Prostate gland (tissue), 2 donors: ENCODE measurements at regions of chr14 and their contacts with region 1.

Region 1: GRCh38 chr14:101359221-101360053 is 201.9 kb upstream of the DIO3 start:
- DNase-seq: peak; percentile 44
- H3K4me3 ChIP-seq: no peak overlapping the region
- H3K27ac ChIP-seq: peak overlapping the region; percentile 11 to 49
- H3K4me1 ChIP-seq: peaks cover 7% of the 10 kb centered on the region
- H3K27me3 ChIP-seq: no peaks in the 10 kb centered on the region
- CTCF ChIP-seq: no peak
- POLR2A ChIP-seq: no peak

Region 2: DNA sequence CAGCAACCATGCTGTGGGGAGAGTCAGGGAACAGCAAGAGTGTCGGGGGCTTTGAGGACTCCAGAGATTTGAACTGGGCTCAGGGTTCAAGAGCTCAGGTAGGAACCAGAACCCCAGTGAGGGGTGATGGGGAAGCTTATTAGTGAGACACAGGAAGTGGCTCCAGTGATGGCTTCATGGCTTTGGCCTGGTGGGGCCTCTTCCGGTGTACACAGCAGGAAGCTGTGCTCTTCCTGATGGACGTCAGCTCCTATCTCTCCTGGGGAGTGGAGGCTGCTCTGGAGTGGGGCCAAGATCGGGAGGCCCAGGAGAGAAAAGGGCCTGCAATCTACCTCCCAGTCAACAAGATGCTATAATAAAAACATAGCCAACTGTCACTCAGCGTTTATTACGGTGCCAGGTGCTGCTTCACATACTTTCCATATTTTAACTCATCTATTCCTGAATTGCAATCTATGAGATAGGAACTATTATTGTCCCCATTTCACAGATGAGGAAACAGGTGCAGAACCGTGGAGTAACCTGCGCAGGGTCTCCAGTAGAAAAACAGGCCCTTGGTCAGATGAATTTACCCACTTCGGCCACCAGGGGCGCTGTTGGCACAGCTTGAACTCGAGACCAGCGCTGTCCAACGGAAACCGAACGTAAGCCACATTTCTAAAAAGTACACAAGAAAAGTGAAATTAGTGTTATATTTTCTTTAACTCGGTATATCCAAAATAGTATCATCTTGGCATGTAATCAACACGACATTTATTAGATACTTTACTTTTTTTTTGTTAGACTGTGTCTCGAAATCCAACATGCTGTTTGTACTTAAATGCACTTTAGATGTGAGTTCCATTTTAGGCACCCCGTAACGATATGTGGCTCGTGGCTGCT is 696.3 kb before region 1 on chr14:
- intact Hi-C with region 1: loop called (anchors 10 kb)
- DNase-seq: peak; percentile 49
- H3K4me3 ChIP-seq: no peak overlapping the region
- H3K27ac ChIP-seq: no peak overlapping the region
- H3K4me1 ChIP-seq: peaks cover 10% of the 10 kb centered on the region
- H3K27me3 ChIP-seq: no peaks in the 10 kb centered on the region
- CTCF ChIP-seq: peak; percentile 84 to 94 (median 89)
- POLR2A ChIP-seq: no peak

Region 3: DNA sequence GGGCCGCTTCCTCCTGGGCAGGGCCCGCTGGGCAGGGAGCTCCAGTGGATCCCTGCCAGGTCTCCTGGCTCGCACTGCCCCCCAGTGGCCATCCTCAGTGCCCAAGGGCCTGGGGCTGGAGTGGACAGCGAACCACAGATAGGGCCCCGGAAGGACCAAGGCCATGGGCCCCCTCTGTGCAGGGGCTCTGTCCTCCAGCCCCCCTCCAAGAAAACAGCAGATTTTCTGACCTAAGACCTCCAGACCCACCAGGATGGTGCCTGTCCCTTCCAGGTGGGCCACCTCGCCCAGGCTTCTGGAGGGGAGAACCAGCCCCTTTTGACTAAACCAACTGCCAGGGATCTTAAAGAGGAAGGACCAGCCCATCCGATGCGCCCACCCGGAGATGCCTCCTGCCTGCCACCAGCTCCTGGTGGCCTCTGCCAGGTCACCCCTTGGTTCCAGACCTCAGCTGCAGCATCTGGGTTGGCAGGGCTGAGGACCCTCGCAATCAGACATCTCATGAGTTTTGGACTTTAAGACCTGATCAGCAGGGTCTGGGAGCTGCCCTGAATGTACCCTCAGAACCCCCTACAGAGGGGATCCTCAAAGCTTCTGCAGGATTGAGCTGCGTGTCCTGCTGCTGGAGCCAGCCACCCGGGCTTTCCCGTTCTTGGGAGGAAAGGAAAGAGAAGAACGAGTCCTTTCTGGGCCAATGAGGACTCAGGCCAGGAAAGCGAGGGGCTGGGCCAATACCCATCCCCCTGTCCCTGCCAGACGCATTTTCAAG is 123.9 kb before region 1 on chr14:
- intact Hi-C with region 1: loop called (anchors 10 kb)
- DNase-seq: no peak
- H3K4me3 ChIP-seq: no peak overlapping the region
- H3K27ac ChIP-seq: no peak overlapping the region
- H3K4me1 ChIP-seq: no peaks in the 10 kb centered on the region
- H3K27me3 ChIP-seq: no peaks in the 10 kb centered on the region
- CTCF ChIP-seq: peak; percentile 20 to 69 (median 50)
- POLR2A ChIP-seq: no peak

Region 4: DNA sequence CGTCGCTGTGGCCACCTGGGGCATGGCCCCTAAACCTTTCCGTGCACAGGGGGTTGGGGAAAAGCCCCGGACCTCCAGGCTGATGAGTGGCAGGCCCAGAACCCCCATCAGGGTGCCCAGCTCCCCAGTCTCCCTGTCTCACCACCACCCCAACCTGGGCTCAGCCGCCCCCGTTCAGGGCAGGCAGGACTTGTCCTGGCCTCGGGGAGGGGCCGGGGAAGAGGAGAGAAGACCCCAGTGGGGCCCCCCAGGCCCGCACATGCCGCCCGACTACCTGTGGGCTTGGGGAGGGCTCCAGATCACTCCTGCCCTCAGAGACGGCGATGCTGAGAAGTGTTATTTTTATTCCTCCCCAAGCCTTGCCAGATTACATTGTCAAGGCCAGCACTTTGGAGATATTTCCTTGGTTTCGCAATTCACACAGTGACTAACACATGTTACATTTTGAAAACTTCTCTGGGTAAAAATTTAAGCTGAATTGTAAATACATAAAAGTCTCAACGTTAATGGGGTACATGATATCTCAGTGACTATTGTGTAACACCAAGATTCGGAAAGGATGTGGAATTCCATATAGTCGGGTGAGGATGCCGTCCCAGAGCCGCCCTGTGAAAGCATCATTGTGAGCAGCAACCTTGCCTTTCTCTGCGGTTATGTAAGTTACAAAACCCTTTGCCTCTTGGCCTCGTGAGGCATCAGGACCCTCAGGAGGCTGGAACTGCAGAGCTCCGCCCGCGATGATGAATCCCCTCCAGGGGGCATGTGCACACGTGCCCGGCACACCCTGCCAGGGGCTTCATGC is 116.2 kb after region 1 on chr14:
- intact Hi-C with region 1: loop called (anchors 5 kb)
- DNase-seq: no peak
- H3K4me3 ChIP-seq: no peak overlapping the region
- H3K27ac ChIP-seq: peak overlapping the region in 1 of 2 donors; percentile 47
- H3K4me1 ChIP-seq: no peaks in the 10 kb centered on the region
- H3K27me3 ChIP-seq: no peaks in the 10 kb centered on the region
- CTCF ChIP-seq: no peak
- POLR2A ChIP-seq: no peak

Region 5: GRCh38 chr14:101495827-101496775 is 136.7 kb after region 1 on chr14:
- intact Hi-C with region 1: loop called (anchors 5 kb)
- DNase-seq: no peak
- H3K4me3 ChIP-seq: no peak overlapping the region
- H3K27ac ChIP-seq: peak overlapping the region; percentile 29 to 33
- H3K4me1 ChIP-seq: no peaks in the 10 kb centered on the region
- H3K27me3 ChIP-seq: no peaks in the 10 kb centered on the region
- CTCF ChIP-seq: no peak
- POLR2A ChIP-seq: no peak

Region 6: GRCh38 chr14:101559624-101560533 is 200.4 kb after region 1 on chr14:
- intact Hi-C with region 1: loop called (anchors 5 kb)
- DNase-seq: no peak
- H3K4me3 ChIP-seq: peak overlapping the region; percentile 33 to 39
- H3K27ac ChIP-seq: peak overlapping the region; percentile 56 to 67
- H3K4me1 ChIP-seq: no peaks in the 10 kb centered on the region
- H3K27me3 ChIP-seq: peaks cover 32% of the 10 kb centered on the region
- CTCF ChIP-seq: peak in 2 of 4 experiments; percentile 24 to 38
- POLR2A ChIP-seq: no peak